ENCODE measurements at regions of chr7 and their contacts with region 1.

Region 1: DNA sequence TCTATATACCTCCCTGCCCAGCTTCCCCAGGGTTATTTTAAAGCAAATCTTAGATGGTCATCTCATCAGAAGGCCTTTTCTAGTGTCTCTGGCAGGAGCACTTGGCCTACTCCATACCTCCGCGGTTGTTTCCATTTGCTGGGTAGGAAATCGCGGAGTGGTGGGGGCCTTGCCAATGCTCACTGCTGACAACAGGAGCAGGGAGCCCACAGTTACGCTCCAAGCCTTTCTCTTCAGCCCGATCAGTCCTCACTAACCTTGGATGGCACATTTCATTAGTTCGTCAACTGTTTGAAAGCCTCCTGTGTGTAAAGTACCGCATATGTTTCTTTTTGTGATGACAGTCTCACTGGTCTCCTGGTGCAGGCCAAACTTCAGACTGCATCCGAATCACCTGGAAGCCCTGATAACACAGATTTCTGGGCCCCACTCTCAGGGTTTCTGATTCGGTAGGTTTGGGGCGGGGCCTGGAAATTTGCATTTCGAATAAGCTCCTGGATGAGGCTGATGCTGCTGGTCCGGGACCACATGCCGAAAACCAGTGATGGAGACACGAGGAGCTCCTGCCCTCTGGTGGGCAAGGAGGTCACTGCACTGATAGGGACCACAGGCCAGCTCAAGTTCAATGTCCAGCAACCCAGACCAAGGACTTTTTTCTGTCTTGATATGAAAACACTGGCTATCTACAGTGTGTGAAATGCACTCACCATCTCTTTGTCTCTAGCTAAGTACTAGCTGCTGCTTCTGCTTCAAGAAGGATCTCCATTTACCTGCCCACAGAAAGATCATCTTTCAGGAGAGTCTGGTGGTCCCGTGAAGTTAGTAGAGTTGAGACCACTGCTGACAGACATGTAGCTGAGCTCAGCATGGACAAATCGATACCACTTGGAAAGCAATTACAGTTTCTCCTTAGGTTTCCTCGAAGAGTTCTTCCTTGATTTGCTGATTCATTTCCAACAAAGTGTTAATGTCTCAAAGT is 14.0 kb downstream of the LRGUK start:
- DNase-seq: peak; percentile 63
- ATAC-seq: peak; percentile 93
- H3K4me3 ChIP-seq: no peak overlapping the region
- H3K4me3 Mint-ChIP-seq: no peak overlapping the region
- H3K27ac ChIP-seq: no peak overlapping the region
- H3K27ac Mint-ChIP-seq: no peak overlapping the region
- H3K4me1 ChIP-seq: peaks cover 0 to 4% of the 10 kb centered on the region in 2 donors
- H3K4me1 Mint-ChIP-seq: peaks cover 2% of the 10 kb centered on the region
- H3K27me3 ChIP-seq: no peaks in the 10 kb centered on the region
- H3K27me3 Mint-ChIP-seq: no peaks in the 10 kb centered on the region
- CTCF ChIP-seq: peak; percentile 95

Region 2: GRCh38 chr7:134126966-134127848 is 14.0 kb before region 1 on chr7 and contains the start of gene LRGUK:
- CTCF ChIA-PET with region 1: interaction called, 15 read pairs
- POLR2A ChIA-PET with region 1: no interaction called
- intact Hi-C with region 1: no loop called
- DNase-seq: peak; percentile 85
- ATAC-seq: peak; percentile 100
- H3K4me3 ChIP-seq: peak within 1 kb of the TSS; percentile 53 to 72 (median 67)
- H3K4me3 Mint-ChIP-seq: peak within 1 kb of the TSS; percentile 91
- H3K27ac ChIP-seq: no peak within 1 kb of the TSS
- H3K27ac Mint-ChIP-seq: no peak within 1 kb of the TSS
- H3K4me1 ChIP-seq: peaks cover 8 to 11% of the 10 kb centered on the region in 2 donors
- H3K4me1 Mint-ChIP-seq: peaks cover 12% of the 10 kb centered on the region
- H3K27me3 ChIP-seq: peaks cover 0 to 5% (median 0%) of the 10 kb centered on the region in 4 experiments
- H3K27me3 Mint-ChIP-seq: peaks cover 27% of the 10 kb centered on the region
- CTCF ChIP-seq: no peak
- total RNA-seq, gene LRGUK: 0.49 and 0.87 TPM in 2 replicates

Region 3: DNA sequence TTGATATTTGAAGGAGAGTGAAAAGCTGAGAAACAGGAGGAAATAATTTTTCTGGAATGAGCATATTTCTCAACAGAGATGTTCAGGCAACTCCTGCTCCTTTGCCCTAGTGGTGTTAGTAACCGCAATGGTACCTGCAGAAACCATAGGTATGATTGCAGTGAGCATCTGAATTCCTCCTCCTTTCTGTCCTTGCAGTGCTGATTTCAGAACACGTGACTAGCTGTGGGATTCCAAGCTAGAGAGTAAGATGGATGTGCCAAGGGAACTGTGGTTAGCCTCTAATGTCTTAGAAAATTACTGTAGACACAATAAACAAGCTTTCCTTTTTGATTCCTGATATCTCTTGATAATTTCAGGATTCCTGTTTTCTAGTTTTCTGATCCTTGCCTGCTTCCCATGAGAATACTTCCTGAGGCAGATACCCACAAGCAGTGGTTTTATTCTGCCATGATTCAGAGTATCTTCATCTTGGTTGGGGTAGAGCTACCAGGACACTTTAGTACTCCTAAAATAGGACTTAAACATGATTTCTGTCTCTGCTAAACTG is 13.5 kb after region 1 on chr7:
- CTCF ChIA-PET with region 1: interaction called, 21 read pairs
- POLR2A ChIA-PET with region 1: no interaction called
- intact Hi-C with region 1: no loop called
- DNase-seq: no peak
- ATAC-seq: no peak
- H3K4me3 ChIP-seq: no peak overlapping the region
- H3K4me3 Mint-ChIP-seq: no peak overlapping the region
- H3K27ac ChIP-seq: no peak overlapping the region
- H3K27ac Mint-ChIP-seq: no peak overlapping the region
- H3K4me1 ChIP-seq: no peaks in the 10 kb centered on the region
- H3K4me1 Mint-ChIP-seq: no peaks in the 10 kb centered on the region
- H3K27me3 ChIP-seq: no peaks in the 10 kb centered on the region
- H3K27me3 Mint-ChIP-seq: peaks cover 5% of the 10 kb centered on the region
- CTCF ChIP-seq: no peak

Region 4: DNA sequence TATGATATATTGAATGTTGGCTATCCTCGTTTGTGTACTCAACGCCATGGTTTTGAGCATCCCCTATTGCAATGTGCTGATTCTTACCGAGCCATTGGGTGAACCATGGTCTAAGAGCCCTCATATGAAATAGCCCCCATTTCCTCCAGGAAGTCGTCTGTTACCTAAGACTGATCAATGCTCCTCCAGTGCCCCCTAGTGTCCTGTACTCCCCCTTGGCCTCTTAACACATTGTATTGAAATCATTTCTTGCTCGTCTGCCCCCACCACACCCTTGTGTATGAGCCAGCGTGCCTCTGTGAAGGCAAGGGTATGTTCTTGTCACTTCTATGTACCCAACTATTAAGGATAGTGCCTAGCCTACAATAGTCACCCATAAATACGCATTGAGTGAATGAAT is 186.7 kb after region 1 on chr7:
- CTCF ChIA-PET with region 1: interaction called, 5 read pairs
- POLR2A ChIA-PET with region 1: no interaction called
- intact Hi-C with region 1: loop called (anchors 5 kb)
- DNase-seq: peak; percentile 77
- ATAC-seq: peak; percentile 79
- H3K4me3 ChIP-seq: no peak overlapping the region
- H3K4me3 Mint-ChIP-seq: no peak overlapping the region
- H3K27ac ChIP-seq: no peak overlapping the region
- H3K27ac Mint-ChIP-seq: no peak overlapping the region
- H3K4me1 ChIP-seq: no peaks in the 10 kb centered on the region
- H3K4me1 Mint-ChIP-seq: peaks cover 4% of the 10 kb centered on the region
- H3K27me3 ChIP-seq: peaks cover 0 to 8% (median 0%) of the 10 kb centered on the region in 4 experiments
- H3K27me3 Mint-ChIP-seq: peaks cover 23% of the 10 kb centered on the region
- CTCF ChIP-seq: peak; percentile 63

Region 5: DNA sequence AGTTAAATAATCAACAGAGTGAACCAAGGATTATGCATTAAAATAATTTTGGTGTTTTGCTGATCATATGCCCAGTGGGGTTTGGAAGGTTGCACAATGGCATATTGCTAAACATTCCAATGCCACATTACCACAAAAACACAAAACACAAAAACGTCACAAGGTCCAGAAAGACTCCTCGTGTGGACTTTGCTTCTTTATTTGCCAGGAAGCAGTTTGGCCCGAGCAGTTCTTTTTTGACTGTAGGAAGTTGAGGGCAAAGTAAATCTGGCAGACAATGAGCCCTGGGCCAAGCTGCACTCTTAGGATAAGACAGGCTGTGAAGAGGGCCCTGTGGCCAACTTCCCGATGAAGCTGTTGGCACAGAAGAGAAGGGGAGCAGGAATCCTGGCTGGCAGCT is 214.7 kb after region 1 on chr7:
- CTCF ChIA-PET with region 1: interaction called, 8 read pairs
- POLR2A ChIA-PET with region 1: no interaction called
- intact Hi-C with region 1: loop called (anchors 1 kb)
- DNase-seq: no peak
- ATAC-seq: no peak
- H3K4me3 ChIP-seq: no peak overlapping the region
- H3K4me3 Mint-ChIP-seq: no peak overlapping the region
- H3K27ac ChIP-seq: no peak overlapping the region
- H3K27ac Mint-ChIP-seq: no peak overlapping the region
- H3K4me1 ChIP-seq: peaks cover 0 to 3% of the 10 kb centered on the region in 2 donors
- H3K4me1 Mint-ChIP-seq: no peaks in the 10 kb centered on the region
- H3K27me3 ChIP-seq: no peaks in the 10 kb centered on the region
- H3K27me3 Mint-ChIP-seq: peaks cover 8% of the 10 kb centered on the region
- CTCF ChIP-seq: no peak